Esophagus squamous epithelium (tissue), 5 donors: ENCODE measurements at regions of chr10 and their contacts with region 1.

Region 1: DNA sequence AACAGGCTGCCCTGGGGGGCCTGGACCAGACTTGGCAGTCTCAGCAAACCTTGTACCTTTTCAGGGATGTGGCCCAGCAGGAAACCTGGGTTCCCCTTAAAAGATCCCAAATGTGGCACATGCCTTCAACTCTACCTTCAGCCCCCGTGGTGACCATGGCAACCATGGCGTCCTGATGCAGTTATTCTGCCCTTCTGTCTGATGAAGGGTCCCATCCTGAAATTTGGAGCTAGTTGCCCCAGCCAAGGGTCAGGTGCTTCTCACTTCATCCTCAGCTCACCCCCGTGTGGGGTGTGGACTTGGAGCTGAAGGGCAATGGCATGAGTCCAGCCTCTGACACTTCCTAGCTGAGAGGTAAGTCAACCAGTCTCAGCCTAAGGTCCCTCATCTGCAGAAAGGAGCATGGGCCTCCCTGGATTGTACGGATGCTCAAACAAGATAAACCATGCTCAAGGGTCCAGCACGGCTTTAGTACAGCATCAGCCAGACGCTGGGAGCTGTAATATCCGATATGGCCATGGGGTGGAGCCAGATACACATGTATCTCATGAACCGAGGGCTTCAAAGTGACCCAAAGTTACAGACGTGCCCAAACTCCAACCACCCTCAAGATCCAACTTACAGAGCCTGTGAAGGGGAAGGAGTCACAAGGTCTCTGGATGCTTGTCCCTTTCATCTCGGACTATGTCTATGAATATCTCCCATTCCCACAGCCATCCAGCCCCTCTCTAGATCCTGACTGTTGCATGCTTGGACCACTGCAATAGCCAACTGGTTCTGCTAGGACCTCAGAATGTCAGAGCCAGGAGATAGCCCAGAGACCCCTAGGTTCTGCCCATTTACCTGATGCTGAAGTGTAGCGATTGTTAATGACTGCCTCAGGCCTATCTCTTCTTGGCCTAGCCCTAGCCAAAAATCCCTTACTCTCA is 142.5 kb downstream of the SH3PXD2A start:
- DNase-seq: no peak
- H3K4me3 ChIP-seq: no peak overlapping the region
- H3K27ac ChIP-seq: peak overlapping the region; percentile 3 to 90 (median 84)
- H3K4me1 ChIP-seq: peaks cover 21 to 57% (median 24%) of the 10 kb centered on the region in 3 donors
- H3K27me3 ChIP-seq: no peaks in the 10 kb centered on the region
- CTCF ChIP-seq: peak; percentile 85 to 96 (median 94)
- POLR2A ChIP-seq: no peak

Region 2: DNA sequence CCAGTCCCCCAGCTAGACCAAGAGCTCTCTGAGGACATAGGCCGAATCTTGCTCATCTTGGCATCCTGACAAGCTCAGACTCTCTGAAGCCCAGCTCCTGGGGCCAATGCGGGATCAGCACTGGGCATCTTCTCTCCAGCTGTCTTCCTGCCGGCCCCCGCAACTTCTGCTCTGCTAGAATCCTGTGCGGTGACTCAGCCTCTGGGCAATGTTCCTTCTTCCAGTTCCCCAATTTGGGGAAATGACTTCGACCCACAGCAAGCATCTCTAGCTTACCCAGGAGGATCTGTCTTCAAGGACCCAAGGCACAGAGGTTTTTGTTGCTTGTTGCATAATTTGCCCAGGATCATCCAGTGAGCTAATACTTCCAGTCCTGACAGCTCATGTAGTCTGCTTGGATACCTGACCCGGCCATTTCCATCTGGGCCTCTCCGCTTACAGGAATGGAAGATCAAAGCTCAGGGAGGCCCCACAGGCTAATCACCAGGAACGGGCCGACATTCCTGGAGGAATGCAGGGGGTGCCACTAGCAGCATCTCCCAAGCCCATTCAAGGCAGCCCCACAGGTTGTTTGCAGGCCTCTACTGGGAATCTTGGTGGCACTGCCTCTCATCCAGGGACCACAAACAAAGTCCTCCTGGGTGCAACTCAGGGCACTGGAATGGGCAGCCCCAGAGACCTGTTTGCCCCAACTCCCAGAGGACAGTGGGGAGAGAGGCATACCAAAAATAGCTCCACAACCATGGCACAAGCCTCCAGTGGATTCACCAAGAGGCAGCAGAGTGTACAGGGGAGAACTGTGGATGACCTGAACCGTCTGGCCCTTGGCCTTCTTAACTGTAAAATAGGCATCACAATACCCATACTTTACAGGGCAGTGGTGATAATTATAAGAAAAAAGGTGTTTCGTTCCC is 67.4 kb before region 1 on chr10:
- intact Hi-C with region 1: no loop called
- DNase-seq: no peak
- H3K4me3 ChIP-seq: no peak overlapping the region
- H3K27ac ChIP-seq: peak overlapping the region; percentile 20 to 75 (median 70)
- H3K4me1 ChIP-seq: peaks cover 31 to 98% (median 90%) of the 10 kb centered on the region in 3 donors
- H3K27me3 ChIP-seq: no peaks in the 10 kb centered on the region
- CTCF ChIP-seq: no peak
- POLR2A ChIP-seq: no peak

Region 3: DNA sequence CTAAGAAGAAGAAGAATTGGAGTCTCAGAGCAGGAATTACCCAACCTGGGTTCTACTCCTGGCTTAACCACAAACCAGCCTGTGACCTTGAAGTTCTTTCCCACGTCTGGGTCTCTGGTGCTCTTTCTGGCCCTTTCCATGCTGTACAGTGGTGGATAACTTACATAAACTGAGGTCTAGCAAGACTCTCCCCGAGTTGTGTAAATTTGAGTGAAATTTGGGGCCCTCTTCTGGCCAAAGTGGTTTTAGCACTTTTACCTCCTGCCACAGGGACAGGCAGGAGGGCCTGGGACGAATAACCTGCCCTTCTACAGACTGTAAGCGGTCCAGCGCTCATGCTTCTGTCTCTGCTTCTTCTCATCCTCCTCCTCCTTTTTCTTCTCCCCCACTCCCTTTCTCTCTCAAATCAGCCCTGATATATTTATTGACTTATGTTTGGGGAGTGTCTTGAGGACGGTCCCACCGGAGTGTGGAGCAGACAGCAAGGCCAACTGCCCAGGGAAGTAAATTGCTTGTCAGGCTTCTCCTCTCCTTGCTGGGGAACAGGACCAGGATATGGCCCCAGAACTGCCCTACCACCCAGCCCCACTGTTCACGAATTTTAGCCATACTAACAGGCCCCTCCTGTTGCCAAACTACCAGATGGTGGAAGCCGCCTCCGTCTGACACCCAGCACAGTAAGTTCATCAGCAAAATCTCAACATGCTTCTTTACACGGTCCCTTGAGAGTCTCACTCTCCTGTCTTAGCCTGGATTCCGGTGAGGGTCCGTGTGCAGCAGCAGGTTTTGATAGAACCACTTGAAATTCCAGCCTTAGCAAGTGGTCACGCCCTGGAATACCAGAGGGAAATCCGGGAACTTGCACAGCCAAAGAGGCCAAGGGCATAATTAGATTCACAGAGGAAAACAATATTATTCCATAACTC is 146.6 kb after region 1 on chr10:
- intact Hi-C with region 1: loop called (anchors 5 kb)
- DNase-seq: no peak
- H3K4me3 ChIP-seq: no peak overlapping the region
- H3K27ac ChIP-seq: peak overlapping the region in 2 of 4 donors; percentile 44 to 46
- H3K4me1 ChIP-seq: peaks cover 12 to 38% (median 12%) of the 10 kb centered on the region in 3 donors
- H3K27me3 ChIP-seq: no peaks in the 10 kb centered on the region
- CTCF ChIP-seq: peak in 5 of 6 experiments; percentile 73 to 83 (median 74)
- POLR2A ChIP-seq: no peak